ENCODE measurements at regions of chr1 and their contacts with region 1.

Region 1: GRCh38 chr1:247373721-247374141 is 42.1 kb upstream of the ZNF496 start:
- DNase-seq: peak; percentile 61
- H3K4me3 ChIP-seq: peak overlapping the region; percentile 23
- H3K27ac ChIP-seq: no peak overlapping the region
- H3K4me1 ChIP-seq: no peaks in the 10 kb centered on the region
- H3K27me3 ChIP-seq: no peaks in the 10 kb centered on the region
- CTCF ChIP-seq: peak; percentile 29

Region 2: DNA sequence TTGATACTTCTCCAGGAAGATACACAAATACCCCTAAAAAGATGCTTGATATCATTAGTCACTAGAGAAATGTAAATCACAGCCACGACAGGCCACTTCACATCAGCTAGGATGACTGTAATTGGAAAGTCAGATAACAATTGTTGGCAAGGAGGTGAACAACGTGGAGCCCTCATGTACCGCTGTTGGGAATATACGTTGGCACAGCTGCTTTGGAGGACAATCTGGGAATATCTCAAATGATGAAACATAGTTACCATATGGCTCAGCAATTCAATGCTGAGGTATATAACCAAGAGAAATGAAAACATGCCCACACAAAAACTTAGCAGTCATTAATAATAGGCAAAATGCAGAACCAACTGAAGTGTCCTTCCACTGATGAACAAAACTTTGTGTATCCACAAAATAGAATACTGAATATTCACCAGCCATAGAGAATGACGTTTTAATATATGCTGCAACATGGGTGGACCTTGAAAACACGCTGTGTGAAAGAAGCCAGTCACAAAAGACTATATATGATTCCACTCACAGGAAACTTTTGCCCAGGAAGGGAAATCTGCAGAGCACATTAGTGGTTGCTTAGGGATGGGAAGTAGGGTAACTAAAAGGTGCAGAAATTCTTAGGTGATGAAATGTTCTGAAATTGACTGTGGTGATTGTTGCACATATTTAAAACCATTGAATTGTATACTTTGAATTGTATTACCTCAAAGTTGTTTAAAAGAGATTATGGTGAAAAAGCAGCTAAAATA is 537.3 kb before region 1 on chr1:
- intact Hi-C with region 1: no loop called
- DNase-seq: no peak
- H3K4me3 ChIP-seq: no peak overlapping the region
- H3K27ac ChIP-seq: no peak overlapping the region
- H3K4me1 ChIP-seq: no peaks in the 10 kb centered on the region
- H3K27me3 ChIP-seq: no peaks in the 10 kb centered on the region
- CTCF ChIP-seq: no peak

Region 3: DNA sequence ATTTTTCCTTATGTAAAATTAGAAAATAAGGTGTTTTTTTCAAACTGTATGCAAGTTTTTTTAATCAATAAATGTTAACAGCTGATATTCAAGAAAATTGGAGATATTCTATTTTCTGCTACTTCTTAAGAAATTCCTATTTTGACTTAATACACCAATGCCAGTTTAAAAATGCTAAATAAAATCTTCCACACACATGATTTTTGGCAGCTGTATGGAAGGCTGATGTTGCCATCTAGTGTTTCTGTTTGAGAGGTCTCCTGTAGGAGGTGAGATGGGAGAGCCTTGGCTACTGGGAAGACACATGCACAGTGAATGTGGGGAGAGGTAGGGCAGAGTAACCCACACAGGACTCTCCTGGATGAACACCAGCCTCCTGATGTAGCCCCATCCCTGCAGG is 113.3 kb after region 1 on chr1:
- intact Hi-C with region 1: loop called (anchors 5 kb)
- DNase-seq: peak; percentile 24
- H3K4me3 ChIP-seq: no peak overlapping the region
- H3K27ac ChIP-seq: no peak overlapping the region
- H3K4me1 ChIP-seq: no peaks in the 10 kb centered on the region
- H3K27me3 ChIP-seq: no peaks in the 10 kb centered on the region
- CTCF ChIP-seq: peak; percentile 36

Region 4: GRCh38 chr1:247638011-247638410 is 264.3 kb after region 1 on chr1:
- intact Hi-C with region 1: no loop called
- DNase-seq: no peak
- H3K4me3 ChIP-seq: no peak overlapping the region
- H3K27ac ChIP-seq: no peak overlapping the region
- H3K4me1 ChIP-seq: no peaks in the 10 kb centered on the region
- H3K27me3 ChIP-seq: no peaks in the 10 kb centered on the region
- CTCF ChIP-seq: no peak